HepG2 (cell line): ENCODE measurements at regions of chr18 and their contacts with region 1.

Region 1: GRCh38 chr18:79378542-79379250 is 17.0 kb upstream of the NFATC1 start:
- DNase-seq: no peak
- ATAC-seq: no peak
- H3K4me3 ChIP-seq: no peak overlapping the region
- H3K27ac ChIP-seq: no peak overlapping the region
- H3K4me1 ChIP-seq: no peaks in the 10 kb centered on the region
- H3K27me3 ChIP-seq: peaks cover 0 to 7% of the 10 kb centered on the region in 2 experiments; a peak in 2 of 5 replicates
- CTCF ChIP-seq: peak; percentile 52
- EP300 ChIP-seq: no peak
- POLR2A ChIP-seq: no peak
- RAD21 ChIP-seq: no peak

Region 2: DNA sequence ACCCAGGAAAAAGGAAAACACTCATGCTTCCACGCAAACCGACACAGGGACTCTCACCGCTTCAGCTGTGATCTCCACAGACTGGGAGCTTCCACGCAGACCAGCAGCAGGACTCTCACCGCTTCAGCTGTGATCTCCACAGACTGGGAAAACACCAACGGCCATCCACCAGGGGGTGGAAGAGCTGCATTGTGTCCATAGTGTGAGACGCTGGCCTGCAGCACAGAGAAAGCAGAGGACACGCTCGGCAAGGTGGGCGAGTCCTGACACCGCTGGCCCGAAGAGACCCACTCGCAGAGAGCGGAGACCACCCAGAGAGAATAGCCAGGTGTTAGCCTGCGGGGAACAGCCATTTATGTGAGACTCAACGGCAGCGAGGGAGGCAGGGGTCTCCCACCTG is 25.4 kb before region 1 on chr18:
- CTCF ChIA-PET with region 1: no interaction called
- POLR2A ChIA-PET with region 1: no interaction called
- in situ Hi-C with region 1: no loop called
- intact Hi-C with region 1: no loop called
- DNase-seq: peak; percentile 10
- ATAC-seq: peak; percentile 93
- H3K4me3 ChIP-seq: no peak overlapping the region
- H3K27ac ChIP-seq: no peak overlapping the region
- H3K4me1 ChIP-seq: no peaks in the 10 kb centered on the region
- H3K27me3 ChIP-seq: no peaks in the 10 kb centered on the region
- CTCF ChIP-seq: peak; percentile 60
- EP300 ChIP-seq: no peak
- POLR2A ChIP-seq: no peak
- RAD21 ChIP-seq: no peak

Region 3: GRCh38 chr18:79528846-79529245 is 150.2 kb after region 1 on chr18:
- CTCF ChIA-PET with region 1: interaction called, 17 read pairs
- POLR2A ChIA-PET with region 1: no interaction called
- in situ Hi-C with region 1: loop called (anchors 5 kb)
- intact Hi-C with region 1: loop called (anchors 1 kb)
- DNase-seq: peak; percentile 36
- ATAC-seq: peak; percentile 84
- H3K4me3 ChIP-seq: no peak overlapping the region
- H3K27ac ChIP-seq: no peak overlapping the region
- H3K4me1 ChIP-seq: no peaks in the 10 kb centered on the region
- H3K27me3 ChIP-seq: peaks cover 9 to 76% of the 10 kb centered on the region in 2 experiments
- CTCF ChIP-seq: peak; percentile 87
- EP300 ChIP-seq: no peak
- POLR2A ChIP-seq: no peak
- RAD21 ChIP-seq: peak; percentile 47; the same call in 1 of the 2 replicates